ENCODE measurements at regions of chr1 and their contacts with region 1.

Region 1: GRCh38 chr1:181479137-181479745 is 4.1 kb upstream of the CACNA1E start:
- H3K4me3 Mint-ChIP-seq: no peak overlapping the region
- H3K27ac Mint-ChIP-seq: no peak overlapping the region
- H3K4me1 Mint-ChIP-seq: no peaks in the 10 kb centered on the region
- H3K27me3 Mint-ChIP-seq: peaks cover 49% of the 10 kb centered on the region

Region 2: GRCh38 chr1:181676269-181676668 is 197.0 kb after region 1 on chr1:
- intact Hi-C with region 1: loop called (anchors 10 kb)
- H3K4me3 Mint-ChIP-seq: no peak overlapping the region
- H3K27ac Mint-ChIP-seq: no peak overlapping the region
- H3K4me1 Mint-ChIP-seq: no peaks in the 10 kb centered on the region
- H3K27me3 Mint-ChIP-seq: peaks cover 5% of the 10 kb centered on the region

Region 3: GRCh38 chr1:181936768-181937581 is 457.7 kb after region 1 on chr1:
- intact Hi-C with region 1: loop called (anchors 5 kb)
- H3K4me3 Mint-ChIP-seq: no peak overlapping the region
- H3K27ac Mint-ChIP-seq: no peak overlapping the region
- H3K4me1 Mint-ChIP-seq: no peaks in the 10 kb centered on the region
- H3K27me3 Mint-ChIP-seq: no peaks in the 10 kb centered on the region

Region 4: DNA sequence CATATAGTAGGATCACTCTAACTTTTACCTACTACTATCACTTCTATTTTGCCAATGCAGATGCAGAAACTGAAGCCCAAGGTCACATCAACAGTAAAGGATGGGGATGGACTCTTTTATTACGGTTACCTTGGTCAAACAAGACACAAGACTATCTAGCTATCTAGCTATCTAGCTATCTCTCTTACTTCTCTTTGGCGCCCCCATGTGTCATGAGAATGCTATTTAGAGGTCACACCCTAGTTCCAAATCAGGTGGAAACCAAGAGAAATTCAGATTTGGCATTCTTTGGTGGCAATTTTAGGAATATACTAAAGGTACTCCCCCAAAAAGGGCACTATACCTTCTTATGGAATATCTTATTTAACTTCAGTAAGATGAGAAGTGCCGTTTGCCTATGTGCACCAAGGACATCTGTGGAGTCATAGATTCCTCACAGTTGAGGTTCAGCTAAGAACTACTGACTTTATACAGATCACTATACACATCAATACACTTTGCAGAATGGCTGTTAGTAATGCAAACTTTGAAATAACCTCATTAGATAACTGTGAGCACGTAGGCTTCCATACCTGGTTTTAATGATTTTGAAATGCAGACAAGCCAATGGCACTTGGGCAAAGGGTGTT is 575.6 kb after region 1 on chr1:
- intact Hi-C with region 1: loop called (anchors 1 kb)
- H3K4me3 Mint-ChIP-seq: no peak overlapping the region
- H3K27ac Mint-ChIP-seq: no peak overlapping the region
- H3K4me1 Mint-ChIP-seq: peaks cover 6% of the 10 kb centered on the region
- H3K27me3 Mint-ChIP-seq: peaks cover 39% of the 10 kb centered on the region

Measured in dendritic cell treated with granulocyte-macrophage colony-stimulating factor and Interleukin-4, amounts not matched to agents 40 ng/mL and 50 ng/mL, for 4 days (primary cell).